ENCODE measurements at regions of chr2 and their contacts with region 1.

Region 1: DNA sequence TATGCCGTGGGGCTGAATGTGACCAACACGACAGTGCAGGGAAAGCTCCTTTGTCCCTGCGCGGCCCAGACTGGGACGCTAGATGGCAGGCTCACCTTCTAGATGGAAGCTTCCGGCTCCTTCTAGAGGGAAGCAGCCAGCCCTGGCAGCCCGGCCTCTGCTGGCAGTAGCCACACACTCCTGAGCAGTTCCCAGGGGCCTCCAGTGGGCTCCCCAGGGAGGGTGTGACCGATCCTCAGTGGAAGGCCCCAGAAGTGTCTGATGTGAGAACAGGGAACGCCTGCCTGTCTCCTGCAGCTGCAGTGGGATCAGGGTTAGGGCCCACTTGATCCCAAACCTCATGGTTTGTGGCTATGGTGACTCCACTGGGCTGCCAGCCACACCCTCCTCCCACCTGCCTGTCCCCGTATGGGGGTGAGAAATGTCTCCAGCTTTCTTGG is 48.5 kb upstream of the LRPPRC start:
- DNase-seq: peak; percentile 94
- H3K4me3 ChIP-seq: no peak overlapping the region
- H3K27ac ChIP-seq: no peak overlapping the region
- H3K4me1 ChIP-seq: no peaks in the 10 kb centered on the region
- H3K27me3 ChIP-seq: peaks cover 13% of the 10 kb centered on the region; the same call in 1 of the 2 replicates

Region 2: DNA sequence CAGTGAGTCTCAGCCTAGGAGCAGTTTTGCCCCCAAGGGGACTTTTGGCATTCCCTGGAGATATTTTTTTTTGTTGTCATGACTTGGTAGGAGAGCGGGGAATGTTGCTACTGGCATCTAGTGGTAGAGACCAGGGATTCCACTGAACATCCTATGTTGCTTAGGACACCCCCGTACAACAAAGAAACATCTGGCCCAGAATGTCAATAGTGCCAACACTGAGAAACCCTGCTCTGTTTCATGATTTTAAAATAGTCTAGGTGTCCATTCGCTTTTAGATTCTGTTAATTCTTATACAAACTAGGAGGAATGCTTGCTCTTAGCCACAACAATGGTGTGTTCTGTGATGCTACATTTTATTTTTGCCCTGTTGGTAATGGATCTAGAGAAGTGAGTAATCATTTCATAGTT is 671.4 kb after region 1 on chr2:
- in situ Hi-C with region 1: loop called (anchors 25 kb)
- DNase-seq: peak; percentile 82
- H3K4me3 ChIP-seq: peak overlapping the region; percentile 13; the same call in 1 of the 2 replicates
- H3K27ac ChIP-seq: peak overlapping the region; percentile 53
- H3K4me1 ChIP-seq: peaks cover 15% of the 10 kb centered on the region
- H3K27me3 ChIP-seq: 0 out of 2 replicates have a peak, but pooled peaks cover 4% of the 10 kb centered on the region

Region 3: GRCh38 chr2:44955593-44956392 is 911.5 kb after region 1 on chr2:
- in situ Hi-C with region 1: loop called (anchors 25 kb)
- DNase-seq: peak; percentile 87
- H3K4me3 ChIP-seq: peak overlapping the region; percentile 57
- H3K27ac ChIP-seq: no peak overlapping the region
- H3K4me1 ChIP-seq: peaks cover 20% of the 10 kb centered on the region
- H3K27me3 ChIP-seq: peaks cover 42% of the 10 kb centered on the region

Measured in GM23248 (cell line).